Mammary epithelial cell (primary cell): ENCODE measurements at regions of chr18 and their contacts with region 1.

Region 1: DNA sequence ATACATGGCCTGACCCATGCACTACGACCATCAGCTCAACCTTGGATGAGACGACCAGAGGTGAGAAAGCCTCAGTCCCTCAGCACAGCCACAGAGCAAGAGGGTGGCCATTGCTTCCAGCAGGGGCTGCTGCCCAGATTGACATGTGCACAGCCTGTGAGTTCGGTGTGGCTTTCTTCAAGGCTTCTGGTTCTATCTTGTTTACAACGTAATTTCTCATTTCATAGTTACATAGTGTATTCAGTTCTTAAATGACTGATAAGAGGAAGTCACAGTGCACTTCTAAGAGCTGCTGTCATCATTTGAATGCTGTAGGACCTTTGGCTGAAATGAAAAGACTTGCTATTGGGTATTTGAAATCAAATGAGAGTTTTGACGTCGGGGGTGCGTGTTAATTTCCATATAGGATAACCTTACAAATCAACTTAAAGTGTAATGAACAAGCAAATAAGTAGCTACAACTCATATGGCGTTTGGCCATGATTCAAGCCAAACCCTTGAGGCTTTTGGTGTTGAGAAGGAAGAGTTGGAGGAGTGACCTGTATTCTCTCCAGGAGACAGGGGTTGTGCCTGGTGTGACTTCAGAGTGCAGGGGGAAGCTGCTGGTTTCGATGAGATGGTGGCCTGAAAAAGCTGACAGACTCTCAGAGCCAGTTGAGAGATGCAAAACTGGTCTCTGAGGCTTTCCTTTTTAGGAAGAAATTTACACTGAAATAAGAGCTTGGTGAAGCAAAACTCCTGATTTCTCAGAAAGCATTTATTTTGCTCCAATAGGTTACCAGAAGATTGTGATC is 51.0 kb downstream of the TSHZ1 start:
- DNase-seq: no peak
- H3K4me3 ChIP-seq: no peak overlapping the region
- H3K27ac ChIP-seq: no peak overlapping the region
- H3K4me1 ChIP-seq: no peaks in the 10 kb centered on the region
- H3K27me3 ChIP-seq: no peaks in the 10 kb centered on the region
- CTCF ChIP-seq: no peak

Region 2: GRCh38 chr18:75679331-75679730 is 417.7 kb after region 1 on chr18:
- CTCF ChIA-PET with region 1: no interaction called
- dilution Hi-C with region 1: loop called (anchors 10 kb)
- in situ Hi-C with region 1: no loop called
- intact Hi-C with region 1: no loop called
- DNase-seq: no peak
- H3K4me3 ChIP-seq: no peak overlapping the region
- H3K27ac ChIP-seq: no peak overlapping the region
- H3K4me1 ChIP-seq: no peaks in the 10 kb centered on the region
- H3K27me3 ChIP-seq: no peaks in the 10 kb centered on the region
- CTCF ChIP-seq: no peak